AG04449 (cell line): ENCODE measurements at regions of chr3 and their contacts with region 1.

Region 1: DNA sequence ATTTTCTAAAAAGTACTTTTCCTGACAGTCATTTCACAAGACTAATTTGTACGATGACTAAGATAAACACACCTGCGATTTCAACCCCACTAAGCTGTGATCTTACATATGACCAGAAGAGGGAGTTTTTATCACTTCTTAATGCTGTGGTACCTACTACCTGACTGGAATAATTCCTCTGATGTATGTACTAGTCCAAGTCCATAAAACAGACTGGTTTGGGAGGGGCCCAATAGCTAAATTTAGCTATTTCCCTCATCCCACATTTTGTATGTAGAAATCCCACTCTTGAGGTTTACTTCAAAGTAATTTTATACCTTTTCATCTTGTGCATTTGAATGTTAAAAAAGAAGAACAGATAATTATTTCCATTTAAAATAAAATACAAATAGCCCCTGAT is 49.7 kb upstream of the SCAANT1 start:
- DNase-seq: no peak
- H3K4me3 ChIP-seq: no peak overlapping the region
- CTCF ChIP-seq: peak; percentile 39

Region 2: GRCh38 chr3:63679186-63679585 is 282.7 kb before region 1 on chr3:
- CTCF ChIA-PET with region 1: no interaction called
- POLR2A ChIA-PET with region 1: no interaction called
- DNase-seq: no peak
- H3K4me3 ChIP-seq: no peak overlapping the region
- CTCF ChIP-seq: no peak

Region 3: DNA sequence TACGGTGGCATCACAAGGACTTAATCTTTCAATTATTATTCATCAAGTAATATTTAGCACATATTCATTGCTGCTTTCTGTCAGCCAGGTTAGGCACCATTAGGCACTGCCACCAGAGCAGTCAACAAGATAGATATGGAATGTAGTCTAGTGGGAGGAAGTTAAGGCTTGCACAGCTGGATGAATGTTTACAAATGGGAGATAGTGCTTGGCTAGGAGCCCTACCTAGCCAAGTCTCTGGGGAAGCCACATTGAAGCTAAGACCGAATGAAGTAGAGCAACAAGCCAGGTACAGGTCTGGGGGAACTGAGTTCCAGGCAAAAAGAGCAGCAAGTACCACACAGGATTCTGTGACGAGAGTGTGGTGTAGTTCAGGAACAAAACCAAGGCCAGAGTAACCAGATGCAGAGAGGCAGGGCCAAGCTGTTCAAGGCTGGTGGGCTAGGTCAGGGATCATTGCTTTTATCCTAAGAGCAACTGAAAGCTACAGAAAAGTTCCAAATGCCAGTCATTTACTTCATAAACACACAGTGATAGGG is 16.3 kb before region 1 on chr3:
- CTCF ChIA-PET with region 1: interaction called, 39 read pairs
- POLR2A ChIA-PET with region 1: no interaction called
- DNase-seq: no peak
- H3K4me3 ChIP-seq: no peak overlapping the region
- CTCF ChIP-seq: no peak

Region 4: GRCh38 chr3:63951492-63952247 is 10.2 kb before region 1 on chr3:
- CTCF ChIA-PET with region 1: interaction called, 39 read pairs
- POLR2A ChIA-PET with region 1: no interaction called
- DNase-seq: no peak
- H3K4me3 ChIP-seq: no peak overlapping the region
- CTCF ChIP-seq: no peak

Region 5: DNA sequence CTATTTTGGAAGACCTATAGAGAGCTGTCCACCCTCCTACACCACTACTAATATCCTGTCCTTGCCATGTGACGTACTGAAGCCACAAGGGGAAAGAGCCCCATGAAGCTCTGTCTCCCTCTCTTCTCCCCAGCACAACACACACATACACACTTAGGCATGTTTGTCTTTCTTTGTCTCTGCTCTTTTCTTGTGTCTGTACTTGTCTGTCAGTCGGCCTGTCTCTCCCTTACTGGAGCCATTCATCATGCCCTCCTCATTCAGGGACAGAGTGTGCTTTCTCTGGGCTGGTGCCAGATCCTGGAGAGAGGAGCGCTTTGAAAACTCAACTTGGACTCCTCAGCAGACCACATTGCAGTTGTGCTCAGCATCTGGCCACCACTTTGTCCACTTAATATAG is 13.8 kb after region 1 on chr3:
- CTCF ChIA-PET with region 1: interaction called, 90 read pairs
- POLR2A ChIA-PET with region 1: no interaction called
- DNase-seq: no peak
- H3K4me3 ChIP-seq: no peak overlapping the region
- CTCF ChIP-seq: no peak

Region 6: DNA sequence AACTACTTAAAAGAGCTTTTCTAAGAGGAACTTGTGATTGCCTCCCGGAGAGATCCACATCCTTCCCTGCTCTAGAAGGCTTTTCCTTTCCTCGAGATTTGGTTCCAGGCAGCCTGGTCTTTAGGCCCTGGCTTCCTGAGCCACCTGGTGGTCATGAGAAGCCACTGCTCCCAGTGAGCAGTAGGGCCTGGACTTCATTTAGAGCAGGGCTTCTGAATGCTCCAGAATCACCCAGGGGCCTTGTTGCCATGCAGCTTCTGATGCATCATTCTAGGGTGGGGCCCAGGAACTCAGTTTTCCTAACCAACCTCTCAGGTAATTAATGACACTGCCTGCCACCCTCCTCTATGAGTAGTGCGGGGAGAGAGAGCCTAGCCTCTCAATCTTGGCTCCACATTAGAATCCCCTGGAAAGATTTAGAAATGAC is 31.8 kb after region 1 on chr3:
- CTCF ChIA-PET with region 1: interaction called, 68 read pairs
- POLR2A ChIA-PET with region 1: no interaction called
- DNase-seq: peak; percentile 23
- H3K4me3 ChIP-seq: no peak overlapping the region
- CTCF ChIP-seq: peak; percentile 92

Region 7: GRCh38 chr3:63998852-63999754 is 37.2 kb after region 1 on chr3:
- CTCF ChIA-PET with region 1: interaction called, 68 read pairs
- POLR2A ChIA-PET with region 1: no interaction called
- DNase-seq: no peak
- H3K4me3 ChIP-seq: no peak overlapping the region
- CTCF ChIP-seq: no peak

Region 8: GRCh38 chr3:64011685-64012084 is 49.8 kb after region 1 on chr3:
- CTCF ChIA-PET with region 1: no interaction called
- POLR2A ChIA-PET with region 1: no interaction called
- DNase-seq: no peak
- H3K4me3 ChIP-seq: no peak overlapping the region
- CTCF ChIP-seq: no peak